Motor neuron (in vitro differentiated cells): ENCODE measurements at regions of chr20 and their contacts with region 1.

Region 1: GRCh38 chr20:37527638-37528441 is at the start of gene BLCAP:
- ATAC-seq: peak; percentile 79 to 92 (median 88)
- H3K4me3 ChIP-seq: peak within 1 kb of the TSS; percentile 52 to 93 (median 79)
- H3K27ac ChIP-seq: peak within 1 kb of the TSS; percentile 95 to 99
- H3K4me1 ChIP-seq: peaks cover 20 to 31% of the 10 kb centered on the region in 2 donors
- total RNA-seq, gene BLCAP: 43.1 to 144 (median 89.7) TPM

Region 2: GRCh38 chr20:37192137-37192854 is 335.5 kb before region 1 on chr20:
- in situ Hi-C with region 1: loop called in 4 of 9 experiments (anchors 10 kb)
- ATAC-seq: peak; percentile 85 to 93 (median 89)
- H3K4me3 ChIP-seq: no peak overlapping the region
- H3K27ac ChIP-seq: no peak overlapping the region
- H3K4me1 ChIP-seq: peaks cover 16 to 20% of the 10 kb centered on the region in 2 donors

Region 3: GRCh38 chr20:37392421-37393178 is 135.2 kb before region 1 on chr20:
- in situ Hi-C with region 1: loop called in 2 of 9 experiments (anchors 10 to 25 kb)
- ATAC-seq: no peak
- H3K4me3 ChIP-seq: no peak overlapping the region
- H3K27ac ChIP-seq: no peak overlapping the region
- H3K4me1 ChIP-seq: peaks cover 36% of the 10 kb centered on the region in 2 donors